GM13976 (cell line): ENCODE measurements at regions of chr15 and their contacts with region 1.

Region 1: DNA sequence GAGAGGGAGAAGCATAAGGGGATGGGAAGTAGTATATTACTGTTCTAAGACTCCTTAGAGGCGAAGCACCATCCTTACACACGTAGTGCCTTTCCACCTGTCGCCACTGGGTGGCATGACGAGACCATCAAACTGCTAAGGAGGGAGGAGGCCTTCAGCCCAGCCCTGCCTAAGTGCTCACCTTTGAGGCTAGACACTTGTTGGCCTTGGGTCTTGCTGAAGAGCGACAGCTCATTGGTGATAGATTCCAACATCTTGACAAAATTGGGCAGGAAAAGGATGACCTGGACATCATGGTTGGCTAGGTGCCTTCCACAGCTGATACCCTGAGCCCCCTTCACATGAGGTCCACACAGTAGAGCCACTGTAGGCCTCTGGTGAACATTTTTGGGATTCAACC is 19.6 kb downstream of the CLK3 start:
- DNase-seq: peak; percentile 77
- CTCF ChIP-seq: peak; percentile 81

Region 2: DNA sequence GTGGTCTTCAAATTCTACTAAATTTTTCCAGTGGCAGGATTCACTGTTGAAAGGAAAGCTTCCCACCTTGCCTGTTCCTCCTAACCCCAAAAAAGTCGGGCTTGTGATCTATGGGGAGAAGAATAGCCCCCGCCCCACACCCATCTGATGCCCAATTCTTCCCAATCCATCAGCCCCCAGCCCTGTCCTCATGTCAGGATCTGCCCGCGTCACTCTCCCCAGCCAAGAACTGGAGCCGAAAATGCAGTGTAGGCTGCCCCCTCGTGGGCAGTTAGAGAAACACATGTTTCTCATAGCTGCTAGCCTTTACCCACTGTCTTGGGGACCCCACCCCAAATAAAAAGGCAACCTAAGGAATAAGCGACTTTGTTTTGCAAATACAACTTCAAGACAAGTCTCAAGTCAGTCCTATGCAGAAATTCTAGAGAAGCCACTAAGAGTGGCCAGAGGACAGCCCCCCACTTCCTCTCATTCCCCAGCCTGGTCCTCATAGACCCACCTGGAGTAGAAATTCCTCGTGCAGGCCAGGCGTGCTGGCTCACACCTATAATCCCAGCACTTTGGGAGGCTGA is 133.6 kb after region 1 on chr15:
- in situ Hi-C with region 1: loop called (anchors 5 kb)
- DNase-seq: peak; percentile 82
- CTCF ChIP-seq: peak; percentile 78

Region 3: DNA sequence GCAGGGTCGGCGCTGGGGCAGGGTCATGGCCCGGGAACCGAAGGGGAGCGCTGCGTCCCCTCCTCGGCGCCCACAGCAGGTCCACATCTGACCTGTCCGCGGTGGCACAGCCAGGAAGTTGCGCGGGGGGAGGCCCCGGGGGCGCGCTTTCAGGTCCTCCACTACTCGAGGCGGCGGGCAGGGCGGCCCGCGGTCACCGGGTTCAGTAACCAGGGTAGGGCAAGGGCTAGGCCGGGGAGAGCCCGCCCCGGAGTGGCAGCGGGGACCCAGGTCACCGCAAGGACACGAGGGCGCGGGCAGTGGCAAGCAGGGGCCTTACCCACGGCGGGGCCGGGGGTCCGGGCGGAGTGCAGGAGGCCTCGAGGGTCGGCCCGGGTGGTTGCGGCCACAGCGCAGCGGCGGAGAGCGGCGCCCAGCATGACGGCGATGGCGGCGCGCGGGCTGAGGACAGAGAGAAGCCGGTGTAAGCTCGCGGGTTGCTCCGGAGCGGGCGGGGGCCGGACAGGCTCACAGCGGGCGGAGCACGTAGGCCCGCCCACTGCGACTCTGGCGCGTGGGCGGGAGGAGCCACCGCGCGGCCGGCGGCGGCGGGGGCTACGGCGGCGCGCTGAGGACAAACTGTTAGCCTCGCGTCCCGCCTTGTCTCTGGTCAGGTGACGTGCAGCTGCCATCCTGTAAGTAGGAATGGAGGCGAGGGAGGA is 302.5 kb after region 1 on chr15 and contains the start of gene COX5A:
- in situ Hi-C with region 1: loop called (anchors 25 kb)
- DNase-seq: peak; percentile 95
- CTCF ChIP-seq: no peak